Mammary epithelial cell (primary cell): ENCODE measurements at regions of chr5 and their contacts with region 1.

Region 1: DNA sequence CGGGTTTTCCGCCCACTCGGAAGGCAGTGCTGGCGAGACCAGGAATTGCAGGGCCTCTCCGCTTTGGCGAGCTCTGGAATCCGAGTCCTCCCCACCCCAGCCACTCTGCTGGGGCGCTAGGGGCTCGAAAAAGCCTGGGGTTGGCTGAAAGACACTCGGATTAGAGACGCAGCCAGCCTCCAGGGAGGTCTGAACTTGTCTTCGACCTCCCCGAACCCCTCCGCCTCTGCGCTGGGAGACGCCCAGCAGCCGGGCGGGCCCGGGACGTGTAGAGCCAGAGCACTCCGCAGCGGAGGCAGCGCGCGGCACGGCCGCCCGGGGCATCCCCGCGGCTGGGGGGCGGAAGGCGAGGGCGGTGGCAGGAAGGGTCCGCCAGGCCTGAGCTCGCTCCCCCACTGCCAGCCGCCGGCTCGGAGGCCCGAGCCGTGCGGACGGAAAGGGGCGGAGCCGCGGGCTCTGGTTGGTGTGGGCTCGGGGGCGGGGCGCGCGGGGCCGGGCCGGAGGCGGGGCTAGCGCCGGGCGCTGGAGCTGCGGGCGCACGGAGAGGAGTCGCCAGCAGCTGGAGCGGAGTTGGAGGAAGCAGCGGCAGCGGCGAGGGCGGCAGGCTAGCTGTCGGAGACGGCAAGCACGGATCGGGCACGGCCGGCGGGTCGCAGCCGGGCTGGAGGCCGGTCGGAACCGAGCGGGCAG is at the start of gene PIK3R1:
- DNase-seq: peak; percentile 96
- H3K4me3 ChIP-seq: peak within 1 kb of the TSS; percentile 88 to 97 (median 91)
- H3K27ac ChIP-seq: peak within 1 kb of the TSS; percentile 77
- H3K4me1 ChIP-seq: peaks cover 20% of the 10 kb centered on the region
- H3K27me3 ChIP-seq: no peaks in the 10 kb centered on the region
- CTCF ChIP-seq: peak; percentile 22 to 42
- total RNA-seq, gene PIK3R1: 74.3 to 195 TPM

Region 2: GRCh38 chr5:67493676-67494075 is 721.7 kb before region 1 on chr5:
- CTCF ChIA-PET with region 1: no interaction called
- dilution Hi-C with region 1: no loop called
- in situ Hi-C with region 1: no loop called
- intact Hi-C with region 1: loop called (anchors 10 kb)
- DNase-seq: peak; percentile 31
- H3K4me3 ChIP-seq: no peak overlapping the region
- H3K27ac ChIP-seq: no peak overlapping the region
- H3K4me1 ChIP-seq: no peaks in the 10 kb centered on the region
- H3K27me3 ChIP-seq: no peaks in the 10 kb centered on the region
- CTCF ChIP-seq: peak; percentile 19 to 62

Region 3: DNA sequence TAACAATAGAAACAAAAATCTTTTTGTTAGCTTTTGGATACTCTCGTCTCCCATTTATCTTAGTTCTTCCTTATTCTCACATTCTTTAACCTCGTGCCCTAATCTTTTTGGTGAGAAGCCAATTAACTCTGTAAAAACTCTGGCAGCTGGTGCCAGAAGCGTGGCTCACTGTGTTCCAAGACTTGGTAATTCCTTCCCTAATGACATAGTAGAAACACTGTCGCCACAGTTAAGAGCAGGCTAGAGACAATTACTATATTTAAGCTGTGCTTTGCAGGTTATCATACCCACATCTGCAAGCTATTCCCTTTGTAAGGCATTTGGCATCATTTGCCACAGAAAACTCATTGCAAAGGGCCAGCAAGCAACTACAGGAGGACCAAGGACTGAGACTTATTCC is 160.7 kb before region 1 on chr5:
- CTCF ChIA-PET with region 1: no interaction called
- dilution Hi-C with region 1: no loop called
- in situ Hi-C with region 1: no loop called
- intact Hi-C with region 1: loop called (anchors 10 kb)
- DNase-seq: no peak
- H3K4me3 ChIP-seq: no peak overlapping the region
- H3K27ac ChIP-seq: no peak overlapping the region
- H3K4me1 ChIP-seq: no peaks in the 10 kb centered on the region
- H3K27me3 ChIP-seq: no peaks in the 10 kb centered on the region
- CTCF ChIP-seq: no peak

Region 4: GRCh38 chr5:68239487-68239886 is 24.1 kb after region 1 on chr5:
- CTCF ChIA-PET with region 1: no interaction called
- dilution Hi-C with region 1: no loop called
- in situ Hi-C with region 1: no loop called
- intact Hi-C with region 1: loop called (anchors 2 kb)
- DNase-seq: peak; percentile 76
- H3K4me3 ChIP-seq: no peak overlapping the region
- H3K27ac ChIP-seq: peak overlapping the region; percentile 52
- H3K4me1 ChIP-seq: peaks cover 23% of the 10 kb centered on the region
- H3K27me3 ChIP-seq: no peaks in the 10 kb centered on the region
- CTCF ChIP-seq: no peak

Region 5: GRCh38 chr5:68673106-68673822 is 457.9 kb after region 1 on chr5:
- CTCF ChIA-PET with region 1: no interaction called
- dilution Hi-C with region 1: no loop called
- in situ Hi-C with region 1: no loop called
- intact Hi-C with region 1: no loop called
- DNase-seq: peak; percentile 21
- H3K4me3 ChIP-seq: no peak overlapping the region
- H3K27ac ChIP-seq: no peak overlapping the region
- H3K4me1 ChIP-seq: no peaks in the 10 kb centered on the region
- H3K27me3 ChIP-seq: no peaks in the 10 kb centered on the region
- CTCF ChIP-seq: no peak

Region 6: GRCh38 chr5:68962757-68963484 is 747.6 kb after region 1 on chr5:
- CTCF ChIA-PET with region 1: no interaction called
- dilution Hi-C with region 1: no loop called
- in situ Hi-C with region 1: no loop called
- intact Hi-C with region 1: no loop called
- DNase-seq: peak; percentile 48
- H3K4me3 ChIP-seq: no peak overlapping the region
- H3K27ac ChIP-seq: no peak overlapping the region
- H3K4me1 ChIP-seq: no peaks in the 10 kb centered on the region
- H3K27me3 ChIP-seq: no peaks in the 10 kb centered on the region
- CTCF ChIP-seq: peak; percentile 75 to 92